CD14-positive monocyte (primary cell): ENCODE measurements at regions of chr7 and their contacts with region 1.

Region 1: DNA sequence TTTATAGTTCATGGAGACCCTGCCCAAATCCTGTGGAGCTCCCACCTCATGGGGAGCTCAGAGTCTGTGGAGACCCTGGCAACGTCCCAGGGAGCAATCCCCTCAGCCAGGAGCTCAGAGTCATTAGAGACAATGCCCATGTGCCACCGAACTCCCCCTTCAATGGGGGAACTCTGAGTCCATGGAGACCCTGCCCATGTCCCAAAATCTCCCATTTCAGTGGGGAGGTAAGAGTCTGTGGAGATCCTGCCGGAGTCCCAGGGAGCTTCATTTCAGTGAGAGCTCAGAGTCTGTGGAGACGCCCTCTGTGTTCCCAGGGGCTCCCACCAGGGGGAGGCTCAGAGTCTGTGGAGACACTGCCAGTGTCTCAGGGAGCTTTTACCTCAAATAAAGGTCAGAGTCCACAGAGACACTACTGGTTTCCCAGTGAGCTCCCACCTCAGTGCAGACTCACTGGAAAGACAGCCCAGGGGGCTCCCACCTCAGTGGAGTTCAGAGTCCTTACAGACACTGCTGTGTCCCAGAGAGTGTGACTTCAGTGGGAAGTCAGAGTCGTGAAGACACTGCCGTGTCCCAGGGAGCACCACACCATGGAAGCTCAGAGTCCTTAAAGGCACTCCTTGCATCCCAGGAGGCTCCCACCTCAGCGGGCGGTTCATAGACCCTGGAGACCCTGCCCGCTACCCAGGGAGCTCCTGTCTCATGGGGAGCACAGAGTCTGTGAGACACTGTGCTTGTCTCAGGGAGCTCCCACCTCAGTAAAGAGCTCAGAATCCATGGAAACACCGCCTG is 5.0 kb downstream of the MYO1G start:
- DNase-seq: peak; percentile 50 to 57 (median 56)
- H3K4me3 ChIP-seq: no peak overlapping the region
- H3K4me3 Mint-ChIP-seq: no peak overlapping the region
- H3K27ac ChIP-seq: peak overlapping the region; percentile 6 to 100
- H3K27ac Mint-ChIP-seq: peak overlapping the region; percentile 41 to 100 (median 60)
- H3K4me1 ChIP-seq: peaks cover 27 to 38% of the 10 kb centered on the region in 2 donors
- H3K4me1 Mint-ChIP-seq: peaks cover 26% of the 10 kb centered on the region
- H3K27me3 ChIP-seq: no peaks in the 10 kb centered on the region
- H3K27me3 Mint-ChIP-seq: peaks cover 0 to 6% (median 0%) of the 10 kb centered on the region in 3 donors
- CTCF ChIP-seq: peak; percentile 82

Region 2: DNA sequence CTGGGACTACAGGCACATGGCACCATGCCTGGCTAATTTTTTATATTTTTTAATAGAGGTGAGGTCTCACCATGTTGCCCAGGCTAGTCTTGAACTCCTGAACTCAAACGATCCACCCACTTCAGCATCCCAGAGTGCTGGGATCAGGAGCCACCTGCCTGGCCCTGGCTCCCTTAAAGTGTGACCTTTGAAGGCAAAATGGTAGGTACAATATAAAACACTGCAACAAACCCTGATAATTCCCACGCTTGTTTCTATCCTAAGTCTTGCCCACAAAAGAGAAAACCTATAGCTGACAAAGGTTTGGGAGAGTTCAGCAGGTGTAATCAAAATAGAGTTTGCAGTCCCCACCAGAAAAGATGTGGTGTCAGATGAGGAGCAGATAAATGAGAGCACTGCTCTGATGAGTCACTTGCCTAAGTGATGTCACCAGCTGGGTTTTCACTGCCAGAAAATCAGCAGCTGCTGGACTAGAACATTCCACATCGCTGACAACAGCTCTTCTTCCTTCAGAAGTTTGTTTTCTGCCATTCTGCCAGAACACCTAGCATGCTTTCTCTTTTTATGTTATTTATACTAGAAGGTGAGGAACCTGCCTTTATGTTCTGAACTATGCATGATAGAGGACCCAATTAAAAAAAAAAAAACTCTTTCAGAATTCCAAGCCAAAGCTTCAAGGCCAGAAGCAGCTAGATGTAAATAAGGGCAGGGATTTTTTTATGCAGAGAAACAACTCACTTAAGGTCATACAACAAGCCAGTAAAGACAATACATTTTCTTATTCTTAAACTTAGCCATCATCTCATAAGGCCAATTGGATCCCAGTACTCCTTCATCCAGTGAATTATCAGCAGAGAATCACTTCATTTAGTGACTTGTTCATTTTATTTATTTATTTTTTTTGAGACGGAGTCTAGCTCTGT is 106.5 kb before region 1 on chr7:
- intact Hi-C with region 1: no loop called
- DNase-seq: peak in 1 of 3 donors; percentile 49
- H3K4me3 ChIP-seq: no peak overlapping the region
- H3K4me3 Mint-ChIP-seq: no peak overlapping the region
- H3K27ac ChIP-seq: no peak overlapping the region
- H3K27ac Mint-ChIP-seq: no peak overlapping the region
- H3K4me1 ChIP-seq: no peaks in the 10 kb centered on the region
- H3K4me1 Mint-ChIP-seq: no peaks in the 10 kb centered on the region
- H3K27me3 ChIP-seq: no peaks in the 10 kb centered on the region
- H3K27me3 Mint-ChIP-seq: peaks cover 0 to 4% (median 3%) of the 10 kb centered on the region in 3 donors
- CTCF ChIP-seq: no peak

Region 3: GRCh38 chr7:44999245-45000095 is 25.7 kb after region 1 on chr7:
- intact Hi-C with region 1: loop called in 1 of 2 experiments (anchors 2 kb)
- DNase-seq: peak; percentile 94 to 98 (median 97)
- H3K4me3 ChIP-seq: peak overlapping the region; percentile 48 to 88 (median 83)
- H3K4me3 Mint-ChIP-seq: peak overlapping the region; percentile 97 to 98
- H3K27ac ChIP-seq: peak overlapping the region; percentile 75 to 86
- H3K27ac Mint-ChIP-seq: peak overlapping the region; percentile 91 to 99 (median 98)
- H3K4me1 ChIP-seq: peaks cover 21 to 34% of the 10 kb centered on the region in 2 donors
- H3K4me1 Mint-ChIP-seq: peaks cover 33% of the 10 kb centered on the region
- H3K27me3 ChIP-seq: no peaks in the 10 kb centered on the region
- H3K27me3 Mint-ChIP-seq: no peaks in the 10 kb centered on the region
- CTCF ChIP-seq: no peak

Region 4: GRCh38 chr7:45026984-45027773 is 53.4 kb after region 1 on chr7:
- intact Hi-C with region 1: loop called in 1 of 2 experiments (anchors 10 kb)
- DNase-seq: peak; percentile 65 to 83 (median 80)
- H3K4me3 ChIP-seq: peak overlapping the region; percentile 81 to 96 (median 84)
- H3K4me3 Mint-ChIP-seq: peak overlapping the region; percentile 92 to 96
- H3K27ac ChIP-seq: peak overlapping the region; percentile 82 to 91
- H3K27ac Mint-ChIP-seq: peak overlapping the region; percentile 89 to 97 (median 93)
- H3K4me1 ChIP-seq: peaks cover 38 to 52% of the 10 kb centered on the region in 2 donors
- H3K4me1 Mint-ChIP-seq: peaks cover 55% of the 10 kb centered on the region
- H3K27me3 ChIP-seq: no peaks in the 10 kb centered on the region
- H3K27me3 Mint-ChIP-seq: peaks cover 0 to 3% (median 2%) of the 10 kb centered on the region in 3 donors
- CTCF ChIP-seq: no peak

Region 5: DNA sequence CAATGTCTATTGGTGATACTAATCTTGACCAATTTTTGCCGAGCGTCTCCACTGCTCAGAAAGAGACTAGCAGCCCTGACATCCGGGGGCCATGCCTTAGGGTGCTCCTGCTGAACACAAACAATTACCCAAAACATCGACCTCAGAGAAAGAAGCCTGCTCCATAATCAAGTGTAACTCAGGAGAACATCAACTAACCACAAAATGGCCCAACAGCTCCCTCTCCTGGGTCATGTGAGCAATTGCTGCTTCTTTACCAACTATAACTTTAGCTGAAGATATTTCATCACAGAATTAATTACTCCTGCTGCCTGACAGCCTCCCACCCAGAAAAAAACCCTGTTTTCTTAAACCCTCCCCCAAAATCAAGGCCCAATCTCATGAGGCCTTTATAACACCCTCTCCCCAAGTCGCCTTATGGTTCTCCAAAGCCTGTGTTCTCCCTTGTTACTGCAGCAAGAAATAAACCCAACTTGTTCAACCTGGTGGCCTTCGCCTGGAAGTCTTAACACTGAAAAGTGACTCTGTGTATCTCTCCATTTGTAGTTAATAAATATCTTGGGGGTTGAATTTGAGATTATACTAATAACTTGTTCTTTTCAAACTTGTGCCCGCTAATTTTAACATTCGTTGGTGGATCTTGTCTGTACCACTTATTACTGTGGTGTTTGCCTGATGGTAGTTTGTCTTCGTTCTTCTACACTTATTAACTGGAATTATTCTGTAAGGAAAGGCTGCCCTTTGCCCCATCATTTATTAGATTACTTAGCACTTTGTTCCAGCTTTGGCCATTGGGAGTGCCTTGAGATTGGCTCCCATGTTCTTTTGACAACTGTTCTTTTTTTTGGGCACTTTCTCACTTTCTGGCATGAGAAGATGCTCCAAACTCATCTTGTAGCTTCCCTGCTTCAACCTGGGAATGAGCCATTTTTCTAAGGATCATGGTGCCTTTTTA is 162.6 kb after region 1 on chr7:
- intact Hi-C with region 1: loop called (anchors 5 to 10 kb)
- DNase-seq: peak; percentile 65 to 84 (median 76)
- H3K4me3 ChIP-seq: no peak overlapping the region
- H3K4me3 Mint-ChIP-seq: no peak overlapping the region
- H3K27ac ChIP-seq: no peak overlapping the region
- H3K27ac Mint-ChIP-seq: peak overlapping the region in 1 of 7 donors; percentile 54
- H3K4me1 ChIP-seq: no peaks in the 10 kb centered on the region
- H3K4me1 Mint-ChIP-seq: peaks cover 11% of the 10 kb centered on the region
- H3K27me3 ChIP-seq: no peaks in the 10 kb centered on the region
- H3K27me3 Mint-ChIP-seq: peaks cover 0 to 3% (median 0%) of the 10 kb centered on the region in 3 donors
- CTCF ChIP-seq: peak; percentile 89